Activated T-helper 1 cell treated with anti-CD3 and anti-CD28 coated beads, Interleukin-12 subunit alpha, Interleukin-12 subunit beta, Interleukin-2, Interleukin-4 antibody, amounts not matched to agents 30 ng/mL and 10 ng/mL and 1 ng/mL, durations not matched to agents 14 hours and 24 hours and 36 hours (primary cell): ENCODE measurements at regions of chr22 and their contacts with region 1.

Region 1: GRCh38 chr22:37807410-37808293 is at the start of gene GCAT:
- DNase-seq: peak; percentile 90
- H3K4me3 Mint-ChIP-seq: peak within 1 kb of the TSS; percentile 82
- H3K27ac Mint-ChIP-seq: peak within 1 kb of the TSS; percentile 58
- H3K4me1 Mint-ChIP-seq: peaks cover 44% of the 10 kb centered on the region
- H3K27me3 Mint-ChIP-seq: peaks cover 13% of the 10 kb centered on the region
- total RNA-seq, gene GCAT: 28.5 and 28.9 TPM in 2 replicates

Region 2: DNA sequence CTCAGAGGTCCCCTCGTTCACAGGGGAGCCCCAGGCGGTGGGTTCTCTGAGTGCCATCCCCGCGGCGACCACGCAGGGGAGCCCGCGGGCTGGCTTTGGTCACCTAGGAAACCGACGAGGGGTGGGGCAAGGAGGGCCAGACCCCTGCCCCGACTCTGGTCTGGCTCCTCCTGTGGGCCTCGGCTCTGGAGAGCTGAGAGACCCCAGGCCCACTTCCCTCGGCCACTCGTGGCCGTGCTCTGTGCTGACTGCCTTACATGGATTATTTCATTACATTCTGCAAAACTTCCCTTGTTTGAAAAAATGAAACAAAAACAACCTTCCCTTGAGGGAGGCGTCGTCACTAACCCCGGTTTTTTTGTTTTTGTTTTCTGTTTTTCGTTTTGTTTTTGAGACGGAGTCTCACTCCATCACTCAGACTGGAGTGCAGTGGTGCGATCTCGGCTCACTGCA is 540.5 kb before region 1 on chr22:
- intact Hi-C with region 1: no loop called
- DNase-seq: peak; percentile 74
- H3K4me3 Mint-ChIP-seq: peak overlapping the region; percentile 86
- H3K27ac Mint-ChIP-seq: peak overlapping the region; percentile 96
- H3K4me1 Mint-ChIP-seq: peaks cover 24% of the 10 kb centered on the region
- H3K27me3 Mint-ChIP-seq: peaks cover 4% of the 10 kb centered on the region

Region 3: GRCh38 chr22:37633625-37634416 is 173.8 kb before region 1 on chr22:
- intact Hi-C with region 1: loop called (anchors 5 kb)
- DNase-seq: peak; percentile 48
- H3K4me3 Mint-ChIP-seq: peak overlapping the region; percentile 72
- H3K27ac Mint-ChIP-seq: peak overlapping the region; percentile 88
- H3K4me1 Mint-ChIP-seq: peaks cover 62% of the 10 kb centered on the region
- H3K27me3 Mint-ChIP-seq: no peaks in the 10 kb centered on the region

Region 4: GRCh38 chr22:37696657-37697537 is 110.8 kb before region 1 on chr22 and contains the start of gene TRIOBP:
- intact Hi-C with region 1: loop called (anchors 5 kb)
- DNase-seq: peak; percentile 85
- H3K4me3 Mint-ChIP-seq: peak within 1 kb of the TSS; percentile 65
- H3K27ac Mint-ChIP-seq: peak within 1 kb of the TSS; percentile 58
- H3K4me1 Mint-ChIP-seq: peaks cover 16% of the 10 kb centered on the region
- H3K27me3 Mint-ChIP-seq: no peaks in the 10 kb centered on the region
- total RNA-seq, gene TRIOBP: 32.7 and 32.9 TPM in 2 replicates

Region 5: DNA sequence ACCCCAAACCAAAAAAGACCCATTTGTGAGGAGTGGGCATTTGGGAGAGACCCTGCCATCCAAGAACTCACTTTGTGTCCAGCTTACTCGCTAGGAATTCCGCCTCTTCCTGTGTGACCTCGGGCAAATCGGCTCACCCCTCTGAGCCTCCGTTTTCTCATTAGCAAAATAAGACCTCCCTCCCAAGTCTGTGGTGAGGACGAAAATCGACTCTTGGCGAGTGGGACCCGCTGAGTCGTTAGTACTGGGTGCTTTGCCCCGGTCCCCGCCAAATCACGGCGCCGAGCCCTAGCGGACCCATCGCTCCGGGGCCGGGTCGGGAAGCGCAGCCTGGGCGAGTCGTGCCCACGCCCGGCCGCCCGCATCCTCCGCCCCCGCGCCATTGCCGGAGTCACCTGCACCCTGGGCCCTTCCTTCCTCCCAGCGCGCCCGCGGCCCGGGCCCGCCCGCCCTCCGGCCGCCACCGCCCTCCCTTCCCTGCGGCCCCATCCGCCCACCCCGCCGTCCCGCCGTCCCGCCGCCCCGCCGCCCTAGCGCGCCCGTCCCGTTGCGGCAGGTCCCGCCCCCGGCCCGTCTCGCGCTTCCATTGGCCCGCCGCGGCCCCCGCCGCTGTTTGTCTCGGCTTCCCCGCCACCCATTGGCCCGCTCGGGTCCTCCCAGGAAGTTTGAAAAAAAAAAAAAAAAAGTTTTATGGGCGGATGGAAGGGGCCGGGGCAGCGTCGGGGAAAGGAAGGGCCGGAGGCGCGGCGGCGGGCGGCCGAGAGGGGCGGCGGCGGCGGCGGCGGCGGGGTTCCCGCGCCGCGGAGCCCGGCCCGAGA is 61.9 kb before region 1 on chr22:
- intact Hi-C with region 1: loop called (anchors 1 kb)
- DNase-seq: peak; percentile 85
- H3K4me3 Mint-ChIP-seq: peak overlapping the region; percentile 83
- H3K27ac Mint-ChIP-seq: peak overlapping the region; percentile 74
- H3K4me1 Mint-ChIP-seq: peaks cover 25% of the 10 kb centered on the region
- H3K27me3 Mint-ChIP-seq: no peaks in the 10 kb centered on the region